CD14-positive monocyte (primary cell): ENCODE measurements at regions of chr10 and their contacts with region 1.

Region 1: GRCh38 chr10:62048919-62049623 is 147.6 kb downstream of the ARID5B start:
- DNase-seq: peak in 1 of 3 donors; percentile 29
- H3K4me3 ChIP-seq: no peak overlapping the region
- H3K4me3 Mint-ChIP-seq: peak overlapping the region in 1 of 2 donors; percentile 32
- H3K27ac ChIP-seq: no peak overlapping the region
- H3K27ac Mint-ChIP-seq: peak overlapping the region in 4 of 7 donors; percentile 15 to 80 (median 53)
- H3K4me1 ChIP-seq: peaks cover 55 to 63% of the 10 kb centered on the region in 2 donors
- H3K4me1 Mint-ChIP-seq: peaks cover 84% of the 10 kb centered on the region
- H3K27me3 ChIP-seq: no peaks in the 10 kb centered on the region
- H3K27me3 Mint-ChIP-seq: peaks cover 0 to 2% (median 0%) of the 10 kb centered on the region in 3 donors
- CTCF ChIP-seq: no peak

Region 2: DNA sequence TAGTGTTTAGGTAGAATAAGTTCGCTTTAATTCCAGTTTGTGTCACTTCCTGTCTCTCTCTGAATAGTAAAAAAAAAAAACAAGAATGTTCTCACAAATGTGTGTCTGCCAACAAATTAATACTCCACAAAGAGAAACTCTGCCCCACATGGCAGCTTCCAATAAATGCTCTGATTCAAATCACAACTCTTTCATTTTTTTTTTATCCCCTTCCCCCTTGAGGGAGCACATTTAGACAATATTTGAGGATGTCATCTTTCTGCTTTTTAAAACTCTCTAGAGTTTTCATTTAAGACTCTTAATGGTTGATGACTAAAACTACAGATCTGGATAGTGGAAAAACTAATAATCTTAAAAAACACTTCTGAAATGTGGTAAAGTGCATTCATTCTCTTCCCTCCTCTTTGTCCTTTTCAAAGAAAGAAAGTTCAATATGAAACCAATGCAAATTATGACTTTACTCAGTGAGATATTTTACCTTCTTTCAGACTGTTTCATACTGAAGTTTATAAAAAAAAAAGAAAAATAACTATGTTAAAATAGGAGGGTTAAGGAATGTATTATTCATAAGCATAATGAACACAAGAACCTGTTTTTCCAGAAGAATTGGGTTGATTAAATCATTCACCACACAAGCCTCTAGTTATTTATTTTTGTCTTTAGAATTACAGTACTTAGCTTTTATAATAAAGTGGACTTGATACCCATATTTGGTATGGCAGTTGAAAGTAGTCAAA is 105.2 kb before region 1 on chr10:
- intact Hi-C with region 1: no loop called
- DNase-seq: peak in 1 of 3 donors; percentile 40
- H3K4me3 ChIP-seq: peak overlapping the region in 1 of 3 experiments; percentile 27
- H3K4me3 Mint-ChIP-seq: no peak overlapping the region
- H3K27ac ChIP-seq: peak overlapping the region in 1 of 2 donors; percentile 90
- H3K27ac Mint-ChIP-seq: peak overlapping the region in 6 of 7 donors; percentile 8 to 98 (median 91)
- H3K4me1 ChIP-seq: peaks cover 36 to 61% of the 10 kb centered on the region in 2 donors
- H3K4me1 Mint-ChIP-seq: peaks cover 49% of the 10 kb centered on the region
- H3K27me3 ChIP-seq: no peaks in the 10 kb centered on the region
- H3K27me3 Mint-ChIP-seq: no peaks in the 10 kb centered on the region
- CTCF ChIP-seq: no peak

Region 3: DNA sequence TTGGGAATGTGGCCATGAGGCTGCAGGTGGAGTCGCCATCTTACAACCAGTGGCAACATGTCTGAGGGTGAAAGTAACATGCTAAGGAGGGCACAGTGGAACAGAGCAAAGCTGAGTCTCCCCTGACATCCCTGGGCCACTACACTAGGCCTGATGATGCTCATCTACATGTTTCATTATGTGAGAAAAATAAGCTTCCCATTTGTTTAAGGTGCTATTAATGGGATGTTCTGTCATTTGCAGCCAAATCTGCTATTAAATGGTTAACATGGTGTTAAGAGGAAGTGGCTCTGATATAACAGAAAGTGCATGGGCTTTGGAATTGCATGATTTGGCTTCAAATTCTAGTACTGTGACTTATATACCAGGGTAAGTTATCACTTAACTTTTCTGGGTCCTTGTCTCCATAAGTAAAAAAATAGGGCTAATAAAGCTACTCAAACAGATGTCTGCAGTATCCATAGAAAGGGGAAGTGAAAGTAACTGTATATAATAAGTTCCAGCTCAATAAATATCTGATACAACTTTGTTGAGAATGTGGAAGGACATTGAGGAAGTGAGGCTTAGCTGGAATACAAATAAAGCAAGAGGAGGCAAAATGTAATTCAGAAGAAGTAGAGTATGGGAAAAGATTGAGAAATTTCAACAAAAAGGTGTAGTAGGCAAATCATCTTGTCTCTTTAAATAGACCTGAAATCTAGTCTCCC is 60.7 kb after region 1 on chr10:
- intact Hi-C with region 1: loop called in 1 of 2 experiments (anchors 10 kb)
- DNase-seq: peak; percentile 63 to 82 (median 73)
- H3K4me3 ChIP-seq: peak overlapping the region in 1 of 3 experiments; percentile 15
- H3K4me3 Mint-ChIP-seq: no peak overlapping the region
- H3K27ac ChIP-seq: peak overlapping the region; percentile 9 to 31
- H3K27ac Mint-ChIP-seq: peak overlapping the region in 6 of 7 donors; percentile 70 to 87 (median 82)
- H3K4me1 ChIP-seq: peaks cover 42 to 48% of the 10 kb centered on the region in 2 donors
- H3K4me1 Mint-ChIP-seq: peaks cover 43% of the 10 kb centered on the region
- H3K27me3 ChIP-seq: no peaks in the 10 kb centered on the region
- H3K27me3 Mint-ChIP-seq: peaks cover 0 to 6% (median 0%) of the 10 kb centered on the region in 3 donors
- CTCF ChIP-seq: no peak

Region 4: GRCh38 chr10:62153191-62153590 is 104.1 kb after region 1 on chr10:
- intact Hi-C with region 1: loop called in 1 of 2 experiments (anchors 10 kb)
- DNase-seq: peak; percentile 71 to 86 (median 85)
- H3K4me3 ChIP-seq: no peak overlapping the region
- H3K4me3 Mint-ChIP-seq: no peak overlapping the region
- H3K27ac ChIP-seq: no peak overlapping the region
- H3K27ac Mint-ChIP-seq: peak overlapping the region in 6 of 7 donors; percentile 45 to 86 (median 57)
- H3K4me1 ChIP-seq: peaks cover 10 to 12% of the 10 kb centered on the region in 2 donors
- H3K4me1 Mint-ChIP-seq: peaks cover 16% of the 10 kb centered on the region
- H3K27me3 ChIP-seq: no peaks in the 10 kb centered on the region
- H3K27me3 Mint-ChIP-seq: peaks cover 0 to 2% (median 0%) of the 10 kb centered on the region in 3 donors
- CTCF ChIP-seq: no peak

Region 5: DNA sequence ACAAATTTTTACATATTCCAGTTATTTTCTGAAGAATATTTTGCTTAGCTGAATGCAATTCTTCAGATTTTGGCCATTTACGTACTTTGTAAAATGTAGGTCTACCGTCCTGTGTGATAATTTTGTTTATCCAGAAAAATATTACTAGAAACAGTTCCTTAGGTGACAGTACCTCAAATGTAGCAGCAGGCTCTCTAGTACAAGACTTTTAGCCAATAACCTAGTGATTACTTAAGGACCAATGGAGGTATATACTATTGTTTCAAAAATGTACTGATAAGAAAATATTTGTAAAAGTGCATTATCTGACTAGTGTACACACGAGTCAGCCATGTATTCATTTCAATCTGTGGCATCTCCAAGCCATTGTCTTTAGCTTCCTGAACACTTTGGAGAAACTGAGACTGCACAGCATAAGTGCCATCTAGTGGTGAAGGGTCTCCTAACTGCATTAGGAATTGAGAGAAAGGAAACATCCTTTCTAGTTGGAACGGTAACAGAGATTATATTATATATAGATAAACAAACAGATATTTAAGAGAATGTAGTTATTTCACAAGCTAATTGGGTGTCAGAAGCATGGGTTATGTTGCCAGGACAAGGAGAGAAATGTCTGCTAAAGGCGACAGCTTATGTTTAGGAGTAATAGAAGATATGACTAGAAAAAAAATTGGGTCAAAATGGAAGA is 195.9 kb after region 1 on chr10:
- intact Hi-C with region 1: loop called (anchors 10 kb)
- DNase-seq: peak in 2 of 3 donors; percentile 69 to 70
- H3K4me3 ChIP-seq: peak overlapping the region in 1 of 3 experiments; percentile 77
- H3K4me3 Mint-ChIP-seq: no peak overlapping the region
- H3K27ac ChIP-seq: peak overlapping the region in 1 of 2 donors; percentile 80
- H3K27ac Mint-ChIP-seq: peak overlapping the region in 6 of 7 donors; percentile 15 to 67 (median 50)
- H3K4me1 ChIP-seq: peaks cover 24 to 36% of the 10 kb centered on the region in 2 donors
- H3K4me1 Mint-ChIP-seq: peaks cover 28% of the 10 kb centered on the region
- H3K27me3 ChIP-seq: no peaks in the 10 kb centered on the region
- H3K27me3 Mint-ChIP-seq: peaks cover 0 to 2% (median 0%) of the 10 kb centered on the region in 3 donors
- CTCF ChIP-seq: peak; percentile 90

Region 6: GRCh38 chr10:62433181-62433692 is 384.2 kb after region 1 on chr10:
- intact Hi-C with region 1: no loop called
- DNase-seq: peak; percentile 74 to 91 (median 87)
- H3K4me3 ChIP-seq: no peak overlapping the region
- H3K4me3 Mint-ChIP-seq: no peak overlapping the region
- H3K27ac ChIP-seq: no peak overlapping the region
- H3K27ac Mint-ChIP-seq: peak overlapping the region in 5 of 7 donors; percentile 50 to 78 (median 75)
- H3K4me1 ChIP-seq: peaks cover 0 to 10% of the 10 kb centered on the region in 2 donors
- H3K4me1 Mint-ChIP-seq: peaks cover 12% of the 10 kb centered on the region
- H3K27me3 ChIP-seq: peaks cover 0 to 8% of the 10 kb centered on the region in 2 donors
- H3K27me3 Mint-ChIP-seq: peaks cover 0 to 3% (median 2%) of the 10 kb centered on the region in 3 donors
- CTCF ChIP-seq: no peak